Activated CD4-positive, alpha-beta memory T cell treated with anti-CD3 and anti-CD28 coated beads for 36 hours (primary cell): ENCODE measurements at regions of chr7 and their contacts with region 1.

Region 1: GRCh38 chr7:7968543-7969305 is at the start of gene GLCCI1:
- DNase-seq: peak; percentile 98
- H3K4me3 Mint-ChIP-seq: peak within 1 kb of the TSS; percentile 85
- H3K27ac Mint-ChIP-seq: peak within 1 kb of the TSS; percentile 83
- H3K4me1 Mint-ChIP-seq: peaks cover 17% of the 10 kb centered on the region
- H3K27me3 Mint-ChIP-seq: no peaks in the 10 kb centered on the region
- total RNA-seq, gene GLCCI1: 8.6 to 11.5 TPM

Region 2: GRCh38 chr7:7182156-7183060 is 786.3 kb before region 1 on chr7 and contains the start of gene C1GALT1:
- CTCF ChIA-PET with region 1: no interaction called
- POLR2A ChIA-PET with region 1: no interaction called
- intact Hi-C with region 1: loop called (anchors 5 kb)
- DNase-seq: peak; percentile 98
- H3K4me3 Mint-ChIP-seq: peak within 1 kb of the TSS; percentile 87
- H3K27ac Mint-ChIP-seq: peak within 1 kb of the TSS; percentile 97
- H3K4me1 Mint-ChIP-seq: peaks cover 22% of the 10 kb centered on the region
- H3K27me3 Mint-ChIP-seq: no peaks in the 10 kb centered on the region
- total RNA-seq, gene C1GALT1: 34.1 to 36.7 TPM

Region 3: DNA sequence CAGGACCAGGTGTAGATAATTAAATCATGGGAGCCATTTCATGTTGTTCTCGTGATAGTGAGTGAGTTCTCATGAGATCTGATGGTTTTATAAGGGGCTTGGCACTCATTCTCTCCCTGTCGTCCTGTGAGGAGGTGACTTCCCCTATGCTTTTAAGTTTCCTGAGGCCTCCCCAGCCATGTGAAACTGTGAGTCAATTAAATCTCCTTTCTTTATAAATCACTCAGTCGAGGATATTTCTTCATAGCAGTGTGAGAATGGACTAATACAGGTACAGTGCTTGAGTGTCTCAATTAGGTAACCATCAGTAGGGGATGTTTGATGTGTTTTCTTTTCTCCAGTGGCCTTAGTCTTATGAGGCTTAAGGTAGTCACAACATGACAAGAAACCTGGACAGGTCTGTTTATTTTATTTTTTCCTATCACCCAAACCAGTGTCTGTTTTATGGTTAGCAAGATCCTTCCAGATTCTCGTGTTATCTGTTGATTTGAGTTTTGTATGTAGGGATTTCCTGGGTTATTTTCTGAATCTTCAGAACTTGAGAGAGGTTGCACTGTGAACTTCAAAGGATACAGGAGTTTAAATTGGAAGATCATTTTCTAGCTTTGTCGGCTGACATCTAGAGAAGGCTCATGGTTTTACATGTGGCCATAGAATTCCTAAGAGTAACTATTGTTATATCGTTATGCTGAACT is 296.0 kb before region 1 on chr7:
- CTCF ChIA-PET with region 1: no interaction called
- POLR2A ChIA-PET with region 1: no interaction called
- intact Hi-C with region 1: loop called (anchors 2 kb)
- DNase-seq: peak; percentile 49
- H3K4me3 Mint-ChIP-seq: peak overlapping the region; percentile 11
- H3K27ac Mint-ChIP-seq: peak overlapping the region; percentile 67
- H3K4me1 Mint-ChIP-seq: peaks cover 39% of the 10 kb centered on the region
- H3K27me3 Mint-ChIP-seq: no peaks in the 10 kb centered on the region

Region 4: GRCh38 chr7:7761340-7761980 is 207.3 kb before region 1 on chr7:
- CTCF ChIA-PET with region 1: interaction called, 3 read pairs
- POLR2A ChIA-PET with region 1: no interaction called
- intact Hi-C with region 1: loop called (anchors 5 kb)
- DNase-seq: no peak
- H3K4me3 Mint-ChIP-seq: peak overlapping the region; percentile 88
- H3K27ac Mint-ChIP-seq: peak overlapping the region; percentile 83
- H3K4me1 Mint-ChIP-seq: peaks cover 32% of the 10 kb centered on the region
- H3K27me3 Mint-ChIP-seq: no peaks in the 10 kb centered on the region

Region 5: DNA sequence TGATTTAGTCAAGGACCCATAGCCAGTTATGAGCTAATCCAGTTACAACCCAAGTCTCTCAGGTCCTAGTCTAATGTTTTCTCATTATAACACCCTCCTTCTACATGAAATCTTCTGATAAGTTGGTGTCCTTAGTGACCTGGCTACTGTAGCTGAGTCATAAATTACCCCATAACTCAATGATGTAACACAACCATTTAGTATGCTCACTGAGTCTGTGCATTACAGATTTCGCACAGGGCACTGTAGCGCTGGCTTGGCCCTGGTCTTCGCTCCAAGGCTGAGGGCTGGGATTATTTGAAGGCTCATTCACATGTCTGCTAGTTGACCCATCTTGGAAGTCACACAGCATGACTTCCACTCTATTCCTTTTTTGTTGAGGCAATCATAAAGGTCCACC is 36.1 kb before region 1 on chr7:
- CTCF ChIA-PET with region 1: no interaction called
- POLR2A ChIA-PET with region 1: no interaction called
- intact Hi-C with region 1: no loop called
- DNase-seq: no peak
- H3K4me3 Mint-ChIP-seq: no peak overlapping the region
- H3K27ac Mint-ChIP-seq: no peak overlapping the region
- H3K4me1 Mint-ChIP-seq: peaks cover 2% of the 10 kb centered on the region
- H3K27me3 Mint-ChIP-seq: no peaks in the 10 kb centered on the region

Region 6: GRCh38 chr7:7944619-7945282 is 24.0 kb before region 1 on chr7:
- CTCF ChIA-PET with region 1: no interaction called
- POLR2A ChIA-PET with region 1: interaction called, 10 read pairs
- intact Hi-C with region 1: loop called (anchors 1 kb)
- DNase-seq: peak; percentile 84
- H3K4me3 Mint-ChIP-seq: peak overlapping the region; percentile 71
- H3K27ac Mint-ChIP-seq: peak overlapping the region; percentile 89
- H3K4me1 Mint-ChIP-seq: peaks cover 26% of the 10 kb centered on the region
- H3K27me3 Mint-ChIP-seq: no peaks in the 10 kb centered on the region

Region 7: GRCh38 chr7:8042796-8043535 is 74.2 kb after region 1 on chr7:
- CTCF ChIA-PET with region 1: no interaction called
- POLR2A ChIA-PET with region 1: interaction called, 6 read pairs
- intact Hi-C with region 1: loop called (anchors 2 kb)
- DNase-seq: no peak
- H3K4me3 Mint-ChIP-seq: no peak overlapping the region
- H3K27ac Mint-ChIP-seq: peak overlapping the region; percentile 25
- H3K4me1 Mint-ChIP-seq: peaks cover 71% of the 10 kb centered on the region
- H3K27me3 Mint-ChIP-seq: no peaks in the 10 kb centered on the region

Region 8: GRCh38 chr7:8115547-8116402 is 147.1 kb after region 1 on chr7:
- CTCF ChIA-PET with region 1: no interaction called
- POLR2A ChIA-PET with region 1: no interaction called
- intact Hi-C with region 1: no loop called
- DNase-seq: no peak
- H3K4me3 Mint-ChIP-seq: no peak overlapping the region
- H3K27ac Mint-ChIP-seq: peak overlapping the region; percentile 1
- H3K4me1 Mint-ChIP-seq: peaks cover 47% of the 10 kb centered on the region
- H3K27me3 Mint-ChIP-seq: no peaks in the 10 kb centered on the region

Region 9: DNA sequence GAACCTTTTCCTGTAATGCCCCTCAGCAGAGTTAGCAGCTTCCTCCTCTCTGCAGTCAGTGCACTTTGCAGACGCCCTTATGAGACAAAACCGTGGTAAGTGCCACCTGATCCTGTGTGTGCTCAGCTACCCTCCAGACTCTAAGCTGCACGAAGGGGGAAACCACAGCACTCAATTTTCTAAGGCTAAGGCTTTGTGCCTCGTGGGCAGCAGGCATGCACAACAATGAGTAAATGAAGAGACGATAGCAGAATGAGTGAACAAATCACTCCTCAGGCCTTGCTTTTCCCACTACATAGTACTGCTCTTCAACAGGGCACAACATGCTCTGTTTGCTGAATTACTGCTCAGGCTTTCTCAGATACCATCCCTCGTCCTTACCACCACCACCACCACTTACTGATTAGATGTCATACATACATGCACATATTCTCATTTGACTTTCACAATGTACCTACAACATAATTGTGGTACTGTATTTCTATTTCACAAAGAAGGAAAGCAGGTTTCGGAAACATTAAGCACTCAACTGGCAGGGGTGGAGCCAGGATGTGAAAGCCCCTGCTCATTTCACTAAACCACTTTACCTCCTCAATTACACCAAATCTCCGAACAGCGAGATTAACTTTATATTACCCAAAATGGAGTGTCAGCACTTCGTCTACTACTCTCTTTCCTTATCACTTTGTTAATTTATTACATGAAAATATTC is 207.8 kb after region 1 on chr7:
- CTCF ChIA-PET with region 1: interaction called, 3 read pairs
- POLR2A ChIA-PET with region 1: interaction called, 5 read pairs
- intact Hi-C with region 1: loop called (anchors 1 kb)
- DNase-seq: peak; percentile 75
- H3K4me3 Mint-ChIP-seq: peak overlapping the region; percentile 67
- H3K27ac Mint-ChIP-seq: peak overlapping the region; percentile 93
- H3K4me1 Mint-ChIP-seq: peaks cover 49% of the 10 kb centered on the region
- H3K27me3 Mint-ChIP-seq: no peaks in the 10 kb centered on the region

Region 10: DNA sequence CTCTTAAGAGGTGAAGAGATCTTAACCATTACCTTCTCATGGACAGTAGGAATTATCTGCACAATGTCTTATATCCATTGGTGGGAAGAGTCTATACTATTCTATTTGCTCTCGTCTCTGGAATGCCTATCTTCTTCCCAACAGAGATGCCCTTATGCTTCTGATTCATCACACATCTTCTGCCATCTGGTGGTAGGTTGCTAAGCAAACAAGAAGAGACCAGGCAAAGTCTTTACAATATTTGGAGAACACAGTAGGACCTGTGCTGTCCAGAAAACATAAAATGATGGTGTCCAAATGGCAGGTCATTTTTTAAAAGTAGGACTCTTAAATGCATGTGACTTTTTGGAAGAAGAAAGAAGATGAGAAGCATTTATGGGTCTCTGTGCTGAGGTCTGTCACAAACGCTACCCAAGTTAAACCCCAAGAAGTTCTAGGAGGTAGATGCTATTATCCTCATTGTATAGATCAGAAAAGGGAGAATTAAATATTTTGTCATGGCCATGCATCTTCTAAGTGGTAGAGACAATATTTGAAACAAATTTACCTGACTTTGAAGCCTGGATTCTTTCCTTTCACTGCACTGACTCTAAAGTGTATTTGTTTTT is 396.9 kb after region 1 on chr7:
- CTCF ChIA-PET with region 1: no interaction called
- POLR2A ChIA-PET with region 1: no interaction called
- intact Hi-C with region 1: no loop called
- DNase-seq: no peak
- H3K4me3 Mint-ChIP-seq: no peak overlapping the region
- H3K27ac Mint-ChIP-seq: no peak overlapping the region
- H3K4me1 Mint-ChIP-seq: no peaks in the 10 kb centered on the region
- H3K27me3 Mint-ChIP-seq: peaks cover 10% of the 10 kb centered on the region